ENCODE measurements at regions of chr3 and their contacts with region 1.

Region 1: DNA sequence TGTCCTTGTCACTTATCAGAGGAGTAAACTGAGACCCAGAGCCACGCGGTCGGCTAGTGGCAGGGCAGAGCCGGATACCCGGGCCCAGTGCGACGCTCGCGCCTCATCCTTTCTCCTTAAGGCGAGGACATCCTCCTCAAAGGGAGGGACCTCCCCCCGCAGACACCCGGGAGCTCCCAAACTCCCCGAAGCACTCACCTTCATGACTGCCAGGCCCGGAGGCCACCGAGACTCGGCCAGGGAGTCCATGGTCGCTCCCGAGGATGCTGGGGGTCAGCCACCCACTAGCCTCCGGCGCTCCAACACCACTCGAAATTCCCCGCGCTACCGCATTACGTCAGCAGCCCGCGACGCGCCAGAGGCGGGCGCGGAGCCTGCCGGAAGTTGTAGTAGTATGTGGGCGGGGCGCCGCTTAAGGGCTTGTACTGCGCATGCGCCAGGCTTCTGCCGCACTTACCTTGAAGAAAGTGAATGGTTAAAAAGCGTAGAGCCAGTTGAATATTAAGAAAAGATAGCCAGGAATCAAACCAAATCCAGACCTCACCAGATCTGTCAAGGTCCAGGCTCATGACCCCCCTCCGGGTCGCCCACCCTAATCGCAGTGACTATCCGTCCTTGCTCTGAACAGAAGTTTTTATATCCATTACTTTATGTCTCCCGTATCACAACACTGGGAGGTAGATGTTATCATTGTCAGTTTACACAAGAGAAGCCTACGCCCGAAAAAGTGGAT is at the start of gene RAD18:
- DNase-seq: peak; percentile 83 to 95 (median 93)
- ATAC-seq: peak; percentile 94
- H3K4me3 ChIP-seq: peak within 1 kb of the TSS; percentile 85 to 89
- H3K4me3 Mint-ChIP-seq: peak within 1 kb of the TSS; percentile 98
- H3K27ac ChIP-seq: peak within 1 kb of the TSS; percentile 87 to 92
- H3K27ac Mint-ChIP-seq: peak within 1 kb of the TSS; percentile 94
- H3K4me1 ChIP-seq: peaks cover 8% of the 10 kb centered on the region
- H3K4me1 Mint-ChIP-seq: peaks cover 35% of the 10 kb centered on the region
- H3K27me3 ChIP-seq: no peaks in the 10 kb centered on the region
- H3K27me3 Mint-ChIP-seq: peaks cover under 1% of the 10 kb centered on the region
- CTCF ChIP-seq: no peak
- total RNA-seq, gene RAD18: 11.7 to 12.1 TPM

Region 2: GRCh38 chr3:9249273-9250192 is 286.2 kb after region 1 on chr3 and contains the start of gene SRGAP3:
- CTCF ChIA-PET with region 1: no interaction called
- POLR2A ChIA-PET with region 1: no interaction called
- intact Hi-C with region 1: loop called in 1 of 2 experiments (anchors 2 kb)
- DNase-seq: peak; percentile 53 to 87 (median 77)
- ATAC-seq: peak; percentile 99
- H3K4me3 ChIP-seq: peak within 1 kb of the TSS; percentile 58 to 65
- H3K4me3 Mint-ChIP-seq: peak within 1 kb of the TSS; percentile 91
- H3K27ac ChIP-seq: no peak within 1 kb of the TSS
- H3K27ac Mint-ChIP-seq: peak within 1 kb of the TSS; percentile 75
- H3K4me1 ChIP-seq: peaks cover 5% of the 10 kb centered on the region
- H3K4me1 Mint-ChIP-seq: peaks cover 24% of the 10 kb centered on the region
- H3K27me3 ChIP-seq: no peaks in the 10 kb centered on the region
- H3K27me3 Mint-ChIP-seq: peaks cover 6% of the 10 kb centered on the region
- CTCF ChIP-seq: peak; percentile 28
- total RNA-seq, gene SRGAP3: 2.2 to 2.3 TPM

Region 3: DNA sequence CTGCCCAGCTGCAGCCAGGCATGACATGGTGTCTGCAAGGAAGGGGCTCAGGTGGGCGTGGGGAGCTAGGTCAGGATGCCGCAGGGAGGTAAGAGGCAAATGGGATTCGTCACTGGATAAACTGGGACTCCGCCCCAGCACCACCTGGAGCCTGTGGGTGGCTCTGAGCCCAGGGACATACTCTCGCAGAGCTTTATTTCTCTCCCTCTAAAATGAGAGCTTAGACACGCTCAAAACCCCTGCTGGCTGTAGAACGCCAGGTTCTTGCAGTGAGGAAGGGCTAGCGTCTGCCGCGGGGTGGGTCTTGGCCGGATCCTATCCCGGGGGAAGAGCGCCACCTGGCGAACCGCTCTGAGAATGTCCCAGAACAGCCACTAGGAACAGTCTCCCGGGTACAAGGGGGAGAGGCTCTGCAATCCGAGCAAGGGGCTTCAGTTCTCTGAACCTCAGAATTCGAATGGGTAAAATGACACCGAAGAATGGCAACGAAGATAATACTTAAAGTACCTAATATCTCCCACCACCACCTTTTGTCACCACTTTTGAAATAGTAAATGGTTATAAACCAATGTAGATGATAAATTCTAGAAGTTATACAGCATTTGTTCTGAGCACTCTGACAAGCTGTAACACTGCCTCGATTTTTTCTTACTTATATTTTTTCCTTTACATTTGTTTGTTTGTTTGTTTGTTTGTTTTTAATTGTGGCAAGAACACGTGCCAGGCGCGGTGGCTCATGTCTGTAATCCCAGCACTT is 339.3 kb after region 1 on chr3:
- CTCF ChIA-PET with region 1: interaction called, 201 read pairs
- POLR2A ChIA-PET with region 1: no interaction called
- intact Hi-C with region 1: no loop called
- DNase-seq: peak; percentile 53 to 85 (median 79)
- ATAC-seq: peak; percentile 98
- H3K4me3 ChIP-seq: no peak overlapping the region
- H3K4me3 Mint-ChIP-seq: no peak overlapping the region
- H3K27ac ChIP-seq: no peak overlapping the region
- H3K27ac Mint-ChIP-seq: no peak overlapping the region
- H3K4me1 ChIP-seq: peaks cover 5% of the 10 kb centered on the region
- H3K4me1 Mint-ChIP-seq: peaks cover 7% of the 10 kb centered on the region
- H3K27me3 ChIP-seq: no peaks in the 10 kb centered on the region
- H3K27me3 Mint-ChIP-seq: peaks cover 12% of the 10 kb centered on the region
- CTCF ChIP-seq: peak; percentile 93

Region 4: DNA sequence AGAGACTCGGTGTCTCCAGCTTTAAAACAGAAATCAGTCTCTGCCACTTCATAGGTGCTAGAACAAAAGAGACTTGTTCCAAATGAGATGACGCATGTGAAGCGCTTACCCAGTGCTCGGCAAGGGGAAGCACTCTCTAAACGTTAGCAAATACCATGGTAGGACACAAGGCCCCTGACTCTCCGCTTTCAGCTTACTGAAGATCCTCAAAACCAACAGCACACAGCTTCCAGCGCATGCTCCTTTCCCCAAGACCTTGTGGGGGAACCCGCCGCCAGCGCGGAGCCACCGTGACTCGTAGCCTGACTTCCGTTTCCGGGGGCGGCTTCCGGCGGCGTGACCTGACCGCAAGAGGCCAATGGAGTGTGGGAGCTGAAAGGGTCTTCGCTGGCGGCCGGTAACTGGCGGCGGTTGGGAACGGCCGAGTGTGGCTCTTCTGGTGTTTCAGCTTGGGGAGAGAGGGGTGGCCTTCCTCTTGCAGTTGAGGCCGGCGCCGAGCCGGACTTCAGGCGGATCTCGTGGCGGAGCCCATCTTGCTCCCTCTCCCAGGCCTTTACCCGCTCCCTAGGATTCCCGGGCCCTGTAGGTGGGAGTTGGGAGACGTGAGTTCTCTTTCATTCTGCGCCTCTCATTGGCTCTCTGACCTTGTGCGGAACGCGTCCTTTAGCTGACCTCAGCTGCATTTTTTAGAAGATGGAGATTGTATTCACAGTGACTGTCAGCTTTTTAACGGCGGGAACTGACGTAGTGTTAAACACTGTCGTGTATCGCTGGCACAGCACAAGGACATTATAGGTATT is 399.6 kb after region 1 on chr3 and contains the start of gene THUMPD3:
- CTCF ChIA-PET with region 1: no interaction called
- POLR2A ChIA-PET with region 1: no interaction called
- intact Hi-C with region 1: loop called (anchors 2 to 5 kb)
- DNase-seq: peak; percentile 82 to 94 (median 92)
- ATAC-seq: peak; percentile 92
- H3K4me3 ChIP-seq: peak within 1 kb of the TSS; percentile 79 to 97
- H3K4me3 Mint-ChIP-seq: peak within 1 kb of the TSS; percentile 96
- H3K27ac ChIP-seq: peak within 1 kb of the TSS; percentile 93 to 97
- H3K27ac Mint-ChIP-seq: peak within 1 kb of the TSS; percentile 99
- H3K4me1 ChIP-seq: peaks cover 19% of the 10 kb centered on the region
- H3K4me1 Mint-ChIP-seq: peaks cover 35% of the 10 kb centered on the region
- H3K27me3 ChIP-seq: no peaks in the 10 kb centered on the region
- H3K27me3 Mint-ChIP-seq: no peaks in the 10 kb centered on the region
- CTCF ChIP-seq: no peak
- total RNA-seq, gene THUMPD3: 84.1 to 84.3 TPM

Region 5: DNA sequence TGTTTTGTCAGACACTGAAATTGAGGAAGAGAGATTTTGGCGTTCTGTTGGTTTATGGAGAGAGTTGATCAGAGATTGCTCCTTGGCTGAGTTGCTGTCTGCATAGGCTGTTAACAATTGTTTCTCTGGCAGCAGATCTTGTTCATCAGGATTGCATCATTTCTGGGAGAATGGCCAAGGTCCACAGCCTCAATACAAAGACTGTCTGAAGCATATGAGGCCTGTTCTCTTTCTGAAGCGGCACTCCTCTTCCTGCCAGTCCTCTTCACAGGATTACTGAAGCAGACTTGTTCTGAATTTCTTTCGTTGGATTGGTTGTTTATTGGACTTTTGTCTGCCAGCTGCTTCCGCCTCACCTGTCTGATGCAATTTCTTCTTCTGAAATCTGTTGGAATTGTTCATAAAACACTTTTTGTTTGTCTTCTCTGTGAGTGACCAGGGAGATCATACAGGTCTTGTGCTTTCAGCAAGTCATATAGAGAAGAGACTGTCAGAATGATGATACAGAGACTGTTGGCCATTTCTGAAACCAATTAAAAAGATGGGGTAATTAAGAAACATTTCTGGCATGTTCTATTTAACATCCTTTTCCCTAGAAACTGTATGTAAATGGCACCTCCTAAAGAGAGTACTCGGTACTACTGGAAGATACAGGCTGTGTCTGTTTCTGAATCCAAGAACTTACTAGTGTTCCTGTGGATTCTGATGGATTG is 459.6 kb after region 1 on chr3:
- CTCF ChIA-PET with region 1: no interaction called
- POLR2A ChIA-PET with region 1: no interaction called
- intact Hi-C with region 1: loop called in 1 of 2 experiments (anchors 2 kb)
- DNase-seq: peak in 2 of 9 experiments; percentile 53 to 67
- ATAC-seq: peak; percentile 93
- H3K4me3 ChIP-seq: no peak overlapping the region
- H3K4me3 Mint-ChIP-seq: no peak overlapping the region
- H3K27ac ChIP-seq: peak overlapping the region in 1 of 2 experiments; percentile 38
- H3K27ac Mint-ChIP-seq: peak overlapping the region; percentile 86
- H3K4me1 ChIP-seq: peaks cover 6% of the 10 kb centered on the region
- H3K4me1 Mint-ChIP-seq: peaks cover 54% of the 10 kb centered on the region
- H3K27me3 ChIP-seq: no peaks in the 10 kb centered on the region
- H3K27me3 Mint-ChIP-seq: no peaks in the 10 kb centered on the region
- CTCF ChIP-seq: peak; percentile 73

Region 6: DNA sequence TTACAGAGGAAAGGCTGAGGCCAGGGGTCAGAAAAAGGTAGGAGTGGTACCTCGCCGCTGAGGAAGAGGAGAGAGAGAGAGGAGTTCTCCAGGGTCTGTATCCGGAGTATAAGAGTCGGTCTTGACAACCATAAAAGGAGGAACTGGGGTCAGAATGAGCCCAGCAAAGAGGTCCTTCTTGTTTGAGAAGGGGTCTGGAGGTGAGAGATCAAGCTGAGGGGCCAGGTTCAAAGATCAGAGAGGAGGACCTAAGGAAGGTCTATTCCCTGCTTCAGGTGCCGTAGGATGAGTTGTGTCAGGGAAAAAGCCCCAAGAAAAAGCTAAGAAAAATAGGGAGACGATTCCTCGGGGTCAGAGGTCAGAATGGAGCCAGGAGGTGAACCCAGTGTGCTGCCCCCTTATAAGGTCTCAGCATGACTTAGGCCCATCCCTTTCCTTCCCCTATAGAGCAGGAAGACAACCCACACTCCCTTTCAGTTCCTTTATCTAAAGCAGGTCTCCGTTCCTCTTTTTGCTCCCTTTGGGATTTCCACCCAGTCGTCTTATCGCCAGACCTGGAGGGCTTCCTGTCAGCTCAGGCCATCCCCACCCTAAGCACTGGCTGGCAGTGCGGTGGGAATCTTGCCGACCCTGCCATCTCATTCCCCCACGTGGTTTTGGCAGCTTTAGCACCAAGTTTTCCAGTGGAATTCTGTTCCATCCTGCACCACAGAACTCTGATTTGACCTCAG is 686.7 kb after region 1 on chr3:
- CTCF ChIA-PET with region 1: no interaction called
- POLR2A ChIA-PET with region 1: no interaction called
- intact Hi-C with region 1: loop called in 1 of 2 experiments (anchors 5 kb)
- DNase-seq: peak in 2 of 9 experiments; percentile 10 to 42
- ATAC-seq: no peak
- H3K4me3 ChIP-seq: peak overlapping the region; percentile 90 to 91
- H3K4me3 Mint-ChIP-seq: peak overlapping the region; percentile 93
- H3K27ac ChIP-seq: peak overlapping the region; percentile 88 to 94
- H3K27ac Mint-ChIP-seq: peak overlapping the region; percentile 97
- H3K4me1 ChIP-seq: peaks cover 27% of the 10 kb centered on the region
- H3K4me1 Mint-ChIP-seq: peaks cover 39% of the 10 kb centered on the region
- H3K27me3 ChIP-seq: no peaks in the 10 kb centered on the region
- H3K27me3 Mint-ChIP-seq: no peaks in the 10 kb centered on the region
- CTCF ChIP-seq: no peak

Measured in CD8-positive, alpha-beta T cell (primary cell).